ENCODE measurements at regions of chr4 and their contacts with region 1.

Region 1: DNA sequence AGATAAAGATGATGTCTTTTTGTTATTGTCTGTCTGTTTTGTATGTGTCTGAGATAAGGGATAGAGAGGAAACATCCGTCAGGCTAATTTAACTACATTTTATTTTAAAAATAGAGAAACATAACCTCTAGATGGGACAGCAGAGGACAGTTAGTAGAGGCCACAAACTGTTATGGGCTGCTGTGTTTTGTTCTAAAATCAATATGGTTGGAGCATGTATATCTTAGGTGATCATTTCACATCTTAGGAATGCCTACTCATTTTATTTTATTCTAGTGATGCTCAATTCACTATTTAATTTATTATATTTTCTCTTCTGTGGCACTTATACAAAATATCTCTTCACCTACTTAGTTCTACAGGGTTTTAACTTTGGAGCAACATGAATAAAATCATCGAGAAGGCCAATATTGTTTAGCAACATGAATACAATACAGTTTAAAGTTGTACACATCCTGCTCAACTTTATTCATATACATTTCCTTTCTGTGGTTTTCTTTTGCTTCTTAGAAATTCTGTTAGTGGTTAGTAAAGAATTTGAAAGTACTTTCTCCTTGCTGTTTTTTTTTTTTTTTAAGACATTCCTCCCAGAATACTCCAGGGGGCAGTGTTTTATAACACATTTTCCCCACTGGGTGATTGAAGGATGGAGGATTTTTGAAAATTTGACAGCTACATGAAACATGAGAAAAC is 392.9 kb downstream of the UNC5C start:
- DNase-seq: peak in 6 of 9 donors; percentile 50 to 72 (median 64)
- ATAC-seq: peak; percentile 78
- H3K4me3 ChIP-seq: no peak overlapping the region
- H3K4me3 Mint-ChIP-seq: peak overlapping the region in 9 of 10 donors; percentile 13 to 79 (median 75)
- H3K27ac ChIP-seq: no peak overlapping the region
- H3K27ac Mint-ChIP-seq: peak overlapping the region; percentile 33 to 93 (median 71)
- H3K4me1 ChIP-seq: peaks cover 4 to 11% of the 10 kb centered on the region in 2 donors
- H3K4me1 Mint-ChIP-seq: peaks cover 12 to 36% (median 16%) of the 10 kb centered on the region in 7 donors
- H3K27me3 ChIP-seq: no peaks in the 10 kb centered on the region
- H3K27me3 Mint-ChIP-seq: peaks cover 0 to 41% (median 0%) of the 10 kb centered on the region in 5 donors

Region 2: GRCh38 chr4:94171616-94172015 is 984.3 kb before region 1 on chr4:
- CTCF ChIA-PET with region 1: no interaction called
- POLR2A ChIA-PET with region 1: no interaction called
- intact Hi-C with region 1: no loop called
- DNase-seq: no peak
- ATAC-seq: no peak
- H3K4me3 ChIP-seq: no peak overlapping the region
- H3K4me3 Mint-ChIP-seq: no peak overlapping the region
- H3K27ac ChIP-seq: no peak overlapping the region
- H3K27ac Mint-ChIP-seq: no peak overlapping the region
- H3K4me1 ChIP-seq: no peaks in the 10 kb centered on the region
- H3K4me1 Mint-ChIP-seq: no peaks in the 10 kb centered on the region
- H3K27me3 ChIP-seq: no peaks in the 10 kb centered on the region
- H3K27me3 Mint-ChIP-seq: peaks cover 0 to 15% (median 11%) of the 10 kb centered on the region in 5 donors

Region 3: GRCh38 chr4:95549246-95550114 is 393.6 kb after region 1 on chr4:
- CTCF ChIA-PET with region 1: no interaction called
- POLR2A ChIA-PET with region 1: no interaction called
- intact Hi-C with region 1: loop called (anchors 5 to 10 kb)
- DNase-seq: peak in 1 of 9 donors; percentile 28
- ATAC-seq: peak; percentile 35
- H3K4me3 ChIP-seq: no peak overlapping the region
- H3K4me3 Mint-ChIP-seq: peak overlapping the region; percentile 58 to 91 (median 72)
- H3K27ac ChIP-seq: no peak overlapping the region
- H3K27ac Mint-ChIP-seq: no peak overlapping the region
- H3K4me1 ChIP-seq: no peaks in the 10 kb centered on the region
- H3K4me1 Mint-ChIP-seq: peaks cover 0 to 22% (median 16%) of the 10 kb centered on the region in 7 donors
- H3K27me3 ChIP-seq: no peaks in the 10 kb centered on the region
- H3K27me3 Mint-ChIP-seq: peaks cover 40 to 67% (median 55%) of the 10 kb centered on the region in 5 donors

Region 4: GRCh38 chr4:96352051-96352517 is 1196.2 kb after region 1 on chr4:
- CTCF ChIA-PET with region 1: no interaction called
- POLR2A ChIA-PET with region 1: no interaction called
- intact Hi-C with region 1: loop called in 1 of 2 experiments (anchors 1 kb)
- DNase-seq: no peak
- ATAC-seq: no peak
- H3K4me3 ChIP-seq: no peak overlapping the region
- H3K4me3 Mint-ChIP-seq: no peak overlapping the region
- H3K27ac ChIP-seq: no peak overlapping the region
- H3K27ac Mint-ChIP-seq: no peak overlapping the region
- H3K4me1 ChIP-seq: no peaks in the 10 kb centered on the region
- H3K4me1 Mint-ChIP-seq: peaks cover 0 to 8% (median 0%) of the 10 kb centered on the region in 7 donors
- H3K27me3 ChIP-seq: no peaks in the 10 kb centered on the region
- H3K27me3 Mint-ChIP-seq: no peaks in the 10 kb centered on the region

Region 5: DNA sequence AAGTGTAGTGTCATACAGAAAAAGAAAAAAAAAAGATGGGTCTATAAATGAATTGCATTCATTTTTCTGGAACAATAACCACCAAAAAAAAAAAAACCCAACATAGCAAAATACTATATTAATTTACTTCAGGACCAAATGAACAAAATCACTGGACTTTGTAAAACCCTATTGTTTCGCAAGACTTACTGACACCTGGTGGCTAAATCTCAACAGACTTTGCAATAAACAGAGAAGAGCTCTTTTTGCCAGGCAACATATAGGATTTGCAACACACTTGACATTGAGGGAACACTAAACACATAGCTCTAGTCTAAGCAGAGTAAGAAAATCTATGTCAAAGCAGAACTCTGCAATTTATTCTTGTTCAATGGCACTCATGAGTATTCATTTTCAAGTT is 1997.1 kb after region 1 on chr4:
- CTCF ChIA-PET with region 1: no interaction called
- POLR2A ChIA-PET with region 1: no interaction called
- intact Hi-C with region 1: loop called in 1 of 2 experiments (anchors 5 kb)
- DNase-seq: no peak
- ATAC-seq: no peak
- H3K4me3 ChIP-seq: no peak overlapping the region
- H3K4me3 Mint-ChIP-seq: no peak overlapping the region
- H3K27ac ChIP-seq: no peak overlapping the region
- H3K27ac Mint-ChIP-seq: no peak overlapping the region
- H3K4me1 ChIP-seq: no peaks in the 10 kb centered on the region
- H3K4me1 Mint-ChIP-seq: no peaks in the 10 kb centered on the region
- H3K27me3 ChIP-seq: no peaks in the 10 kb centered on the region
- H3K27me3 Mint-ChIP-seq: no peaks in the 10 kb centered on the region

Measured in naive thymus-derived CD4-positive, alpha-beta T cell (primary cell).